Ascending aorta (tissue), 2 donors: ENCODE measurements at regions of chr12 and their contacts with region 1.

Region 1: DNA sequence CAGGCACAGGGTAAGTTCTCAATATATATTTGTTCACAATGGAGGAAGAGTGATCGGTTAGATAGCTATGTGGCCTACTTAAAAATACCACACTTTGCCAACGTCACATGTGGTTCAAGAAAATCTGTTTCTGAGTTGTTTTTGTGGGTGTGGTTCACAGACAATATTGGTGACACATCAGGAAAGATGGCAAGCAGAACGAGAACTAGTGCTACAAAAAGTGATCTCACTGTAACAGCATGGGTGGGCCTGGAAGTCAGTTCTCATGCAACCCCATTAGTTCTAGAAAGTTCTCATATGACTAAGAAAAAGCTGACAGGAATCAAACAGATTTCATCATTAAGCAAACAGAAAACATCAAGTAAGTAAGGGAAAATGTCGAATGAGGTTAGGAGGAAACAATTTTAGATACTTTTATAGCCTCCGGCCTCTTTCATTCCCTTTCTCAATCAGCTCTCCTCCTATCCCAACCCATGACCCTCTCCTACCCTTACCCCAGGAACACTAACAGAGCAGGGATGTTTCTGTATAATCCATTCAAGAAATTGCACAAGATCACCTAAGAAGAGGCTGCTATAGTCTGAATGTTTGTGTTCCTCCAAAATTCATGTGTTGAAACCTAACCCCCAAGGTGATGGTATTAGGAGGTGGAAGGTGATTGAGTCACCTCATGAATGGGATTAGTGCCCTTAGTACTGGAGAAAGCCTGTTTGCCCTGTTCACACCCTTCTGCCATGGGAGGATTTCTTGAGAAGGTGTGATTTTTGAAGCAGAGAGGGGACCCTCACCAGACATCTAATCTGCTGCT is 15.5 kb upstream of the NTN4 start:
- DNase-seq: peak in 1 of 2 donors; percentile 84
- H3K4me3 ChIP-seq: no peak overlapping the region
- H3K27ac ChIP-seq: peak overlapping the region; percentile 80 to 85
- H3K4me1 ChIP-seq: peaks cover 0 to 32% of the 10 kb centered on the region in 2 donors
- H3K27me3 ChIP-seq: no peaks in the 10 kb centered on the region
- CTCF ChIP-seq: no peak

Region 2: GRCh38 chr12:95608252-95609033 is 197.6 kb before region 1 on chr12:
- intact Hi-C with region 1: loop called (anchors 1 kb)
- DNase-seq: peak; percentile 73 to 96
- H3K4me3 ChIP-seq: peak overlapping the region in 1 of 2 donors; percentile 10
- H3K27ac ChIP-seq: peak overlapping the region; percentile 81 to 89
- H3K4me1 ChIP-seq: peaks cover 0 to 7% of the 10 kb centered on the region in 2 donors
- H3K27me3 ChIP-seq: no peaks in the 10 kb centered on the region
- CTCF ChIP-seq: no peak

Region 3: GRCh38 chr12:95700316-95700785 is 105.7 kb before region 1 on chr12:
- intact Hi-C with region 1: loop called (anchors 1 kb)
- DNase-seq: peak; percentile 13 to 85
- H3K4me3 ChIP-seq: peak overlapping the region in 1 of 2 donors; percentile 26
- H3K27ac ChIP-seq: peak overlapping the region; percentile 70 to 77
- H3K4me1 ChIP-seq: peaks cover 7 to 19% of the 10 kb centered on the region in 2 donors
- H3K27me3 ChIP-seq: no peaks in the 10 kb centered on the region
- CTCF ChIP-seq: no peak

Region 4: GRCh38 chr12:95721350-95721749 is 84.7 kb before region 1 on chr12:
- intact Hi-C with region 1: no loop called
- DNase-seq: no peak
- H3K4me3 ChIP-seq: no peak overlapping the region
- H3K27ac ChIP-seq: no peak overlapping the region
- H3K4me1 ChIP-seq: peaks cover 0 to 10% of the 10 kb centered on the region in 2 donors
- H3K27me3 ChIP-seq: no peaks in the 10 kb centered on the region
- CTCF ChIP-seq: no peak

Region 5: DNA sequence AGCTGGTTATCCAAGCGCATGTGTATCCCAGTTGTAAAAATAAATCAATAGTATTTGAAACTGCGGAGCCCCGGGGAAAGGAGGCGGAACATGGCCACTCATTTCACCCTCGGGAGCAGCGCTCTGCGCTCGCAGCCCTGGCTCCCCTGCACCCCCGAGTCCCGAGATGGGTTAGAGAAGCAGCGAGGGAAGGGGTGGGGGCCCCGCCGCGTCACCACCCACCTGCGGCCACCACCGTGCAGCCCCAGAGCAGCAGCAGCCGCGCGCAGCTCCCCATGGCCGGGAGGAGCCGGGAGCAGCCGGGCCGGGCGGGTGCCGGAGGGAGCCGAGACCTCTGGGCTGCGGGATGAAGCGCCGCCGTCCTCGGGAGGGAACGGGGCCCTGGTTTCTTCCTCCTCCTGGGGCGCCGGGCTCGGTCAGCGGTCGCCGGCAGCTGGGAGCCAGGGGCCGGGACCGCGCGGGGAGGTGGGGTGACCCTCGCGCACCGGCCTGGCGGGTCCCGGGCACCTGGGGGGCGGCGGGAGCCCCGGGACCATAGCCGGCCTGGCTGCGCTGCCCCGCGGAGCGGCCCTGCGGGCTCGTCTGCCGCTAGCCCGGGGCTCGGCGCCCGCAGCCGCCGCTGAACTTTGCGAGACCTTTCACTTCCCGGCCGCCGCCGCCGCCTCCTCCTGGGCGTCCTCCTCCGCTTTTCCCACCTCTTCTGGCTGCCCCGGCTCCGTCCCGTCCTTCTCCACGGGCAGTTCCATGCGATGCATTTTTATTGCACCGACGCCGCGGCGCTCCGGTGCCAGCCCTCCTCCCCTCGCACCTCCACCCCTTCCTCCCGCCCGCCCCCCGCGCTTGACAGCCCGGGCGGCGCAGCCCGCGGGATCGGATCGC is 15.8 kb before region 1 on chr12 and contains the start of gene NTN4:
- intact Hi-C with region 1: loop called (anchors 1 kb)
- DNase-seq: peak in 1 of 2 donors; percentile 78
- H3K4me3 ChIP-seq: peak within 1 kb of the TSS; percentile 89 to 96
- H3K27ac ChIP-seq: peak within 1 kb of the TSS; percentile 91 to 94
- H3K4me1 ChIP-seq: peaks cover 0 to 4% of the 10 kb centered on the region in 2 donors
- H3K27me3 ChIP-seq: no peaks in the 10 kb centered on the region
- CTCF ChIP-seq: no peak
- total RNA-seq, gene NTN4: 63.9 TPM